ENCODE measurements at regions of chr17 and their contacts with region 1.

Region 1: DNA sequence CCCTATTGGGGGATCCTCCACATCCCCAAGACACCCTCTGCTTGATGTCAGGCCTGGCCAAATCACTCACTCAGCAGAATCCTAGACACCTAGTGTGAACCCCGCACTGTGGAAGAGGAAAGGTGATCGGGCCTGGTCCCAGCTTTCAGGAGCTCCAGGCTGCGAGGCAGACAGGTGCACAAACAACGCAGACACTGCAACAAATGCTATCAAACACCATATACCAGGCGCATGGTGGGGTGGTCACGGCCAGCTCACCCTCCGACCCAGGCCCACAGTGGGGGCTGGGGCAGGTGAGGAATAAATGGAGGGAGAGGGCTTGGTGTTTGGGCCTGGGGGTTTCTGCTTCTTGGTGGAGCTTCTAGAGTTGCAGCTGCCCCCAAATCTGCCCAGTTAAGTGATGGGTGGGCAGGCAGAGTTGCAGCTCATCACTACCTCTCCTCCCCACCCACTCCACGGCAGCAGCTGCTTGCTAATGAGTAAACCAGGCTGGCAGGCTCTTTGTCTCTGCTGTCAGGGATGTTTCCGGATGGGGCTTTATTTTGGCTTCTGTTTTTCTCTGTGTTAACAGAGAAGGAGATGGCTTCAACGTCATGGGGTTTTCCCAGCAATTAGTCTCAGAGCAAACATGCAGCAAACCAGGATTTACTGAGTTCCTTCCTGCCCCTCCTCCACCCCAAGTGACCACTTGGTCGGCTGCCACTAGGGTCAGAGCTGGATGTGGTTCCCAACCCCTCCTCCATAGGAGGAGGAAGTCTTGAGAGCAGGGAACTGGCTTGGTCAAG is 46.6 kb downstream of the PECAM1 start:
- DNase-seq: peak; percentile 79
- H3K4me3 Mint-ChIP-seq: no peak overlapping the region
- H3K27ac Mint-ChIP-seq: peak overlapping the region; percentile 59
- H3K4me1 Mint-ChIP-seq: peaks cover 13% of the 10 kb centered on the region
- H3K27me3 Mint-ChIP-seq: no peaks in the 10 kb centered on the region
- CTCF ChIP-seq: no peak

Region 2: GRCh38 chr17:64332502-64332901 is 11.5 kb before region 1 on chr17:
- CTCF ChIA-PET with region 1: no interaction called
- POLR2A ChIA-PET with region 1: interaction called, 10 read pairs
- intact Hi-C with region 1: no loop called
- DNase-seq: peak; percentile 86
- H3K4me3 Mint-ChIP-seq: peak overlapping the region; percentile 54
- H3K27ac Mint-ChIP-seq: peak overlapping the region; percentile 89
- H3K4me1 Mint-ChIP-seq: peaks cover 48% of the 10 kb centered on the region
- H3K27me3 Mint-ChIP-seq: no peaks in the 10 kb centered on the region
- CTCF ChIP-seq: no peak

Measured in MCF 10A (cell line).